Left colon (tissue), 2 donors: ENCODE measurements at regions of chr13 and their contacts with region 1.

Region 1: GRCh38 chr13:113393563-113394338 is 29.8 kb upstream of the GRTP1 start:
- DNase-seq: peak; percentile 60 to 85
- ATAC-seq: peak; percentile 80

Region 2: DNA sequence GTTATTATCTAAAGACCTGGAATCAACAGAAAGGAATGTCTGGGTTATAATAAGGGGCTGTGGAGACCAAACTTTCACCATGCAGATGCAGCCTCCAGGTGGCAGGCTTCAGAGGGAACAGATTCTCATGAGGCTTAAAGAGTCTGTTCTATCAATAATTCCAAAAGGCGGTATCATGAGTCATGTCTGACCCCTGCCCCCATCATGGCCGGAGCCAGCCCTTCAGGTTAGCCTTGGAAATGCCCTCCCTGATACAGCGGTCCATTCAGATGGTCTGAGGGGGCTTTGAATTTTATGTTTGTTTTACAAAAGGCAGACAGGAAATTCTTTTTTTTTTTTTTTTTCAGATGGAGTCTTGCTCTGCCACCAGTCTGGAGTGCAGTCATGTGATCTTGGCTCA is 118.4 kb before region 1 on chr13:
- intact Hi-C with region 1: loop called in 1 of 2 experiments (anchors 10 kb)
- DNase-seq: peak in 1 of 2 donors; percentile 56
- ATAC-seq: peak; percentile 92